ENCODE measurements at regions of chr9 and their contacts with region 1.

Region 1: DNA sequence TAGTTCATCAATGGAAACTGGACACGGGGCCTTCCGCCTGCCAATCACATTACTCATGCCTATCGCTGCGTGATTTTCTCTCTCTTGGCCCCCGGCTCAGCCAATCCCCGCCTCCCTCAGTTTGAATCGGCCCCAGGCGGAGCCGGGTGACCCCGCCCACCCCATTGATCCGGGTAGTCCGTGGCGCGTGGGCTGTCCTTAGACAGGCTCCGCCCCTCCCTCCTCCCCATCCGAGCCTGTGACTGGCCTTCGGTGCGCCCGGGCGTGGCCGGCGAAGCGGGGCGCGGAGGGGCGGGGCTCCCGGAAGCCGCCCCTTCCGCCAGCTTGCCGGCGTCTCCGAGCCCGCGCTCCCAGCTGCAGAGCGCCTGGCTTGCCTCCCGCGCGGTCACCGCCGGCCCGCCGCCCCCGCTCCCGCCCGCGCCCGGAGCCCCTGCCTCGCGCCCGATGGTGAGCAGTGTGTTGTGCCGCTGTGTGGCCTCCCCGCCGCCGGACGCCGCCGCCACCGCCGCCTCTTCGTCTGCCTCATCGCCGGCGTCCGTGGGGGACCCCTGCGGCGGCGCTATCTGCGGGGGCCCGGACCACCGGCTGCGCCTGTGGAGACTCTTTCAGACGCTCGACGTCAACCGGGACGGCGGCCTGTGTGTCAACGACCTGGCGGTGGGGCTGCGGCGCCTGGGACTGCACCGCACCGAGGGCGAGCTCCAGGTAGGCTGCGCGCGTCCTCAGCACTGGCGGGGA is at the start of gene SLC25A25:
- DNase-seq: peak; percentile 100
- H3K4me3 Mint-ChIP-seq: peak within 1 kb of the TSS; percentile 97
- H3K27ac Mint-ChIP-seq: peak within 1 kb of the TSS; percentile 86
- H3K4me1 Mint-ChIP-seq: peaks cover 55% of the 10 kb centered on the region
- H3K27me3 Mint-ChIP-seq: no peaks in the 10 kb centered on the region
- total RNA-seq, gene SLC25A25: 21.3 to 22.2 TPM

Region 2: GRCh38 chr9:127943731-127944144 is 124.3 kb before region 1 on chr9:
- CTCF ChIA-PET with region 1: interaction called, 28 read pairs
- POLR2A ChIA-PET with region 1: interaction called, 9 read pairs
- DNase-seq: peak; percentile 80
- H3K4me3 Mint-ChIP-seq: no peak overlapping the region
- H3K27ac Mint-ChIP-seq: peak overlapping the region; percentile 59
- H3K4me1 Mint-ChIP-seq: peaks cover 19% of the 10 kb centered on the region
- H3K27me3 Mint-ChIP-seq: no peaks in the 10 kb centered on the region

Region 3: GRCh38 chr9:127955294-127956035 is 112.6 kb before region 1 on chr9:
- CTCF ChIA-PET with region 1: interaction called, 3 read pairs
- POLR2A ChIA-PET with region 1: interaction called, 12 read pairs
- DNase-seq: peak; percentile 81
- H3K4me3 Mint-ChIP-seq: peak overlapping the region; percentile 31
- H3K27ac Mint-ChIP-seq: peak overlapping the region; percentile 66
- H3K4me1 Mint-ChIP-seq: peaks cover 72% of the 10 kb centered on the region
- H3K27me3 Mint-ChIP-seq: no peaks in the 10 kb centered on the region

Region 4: DNA sequence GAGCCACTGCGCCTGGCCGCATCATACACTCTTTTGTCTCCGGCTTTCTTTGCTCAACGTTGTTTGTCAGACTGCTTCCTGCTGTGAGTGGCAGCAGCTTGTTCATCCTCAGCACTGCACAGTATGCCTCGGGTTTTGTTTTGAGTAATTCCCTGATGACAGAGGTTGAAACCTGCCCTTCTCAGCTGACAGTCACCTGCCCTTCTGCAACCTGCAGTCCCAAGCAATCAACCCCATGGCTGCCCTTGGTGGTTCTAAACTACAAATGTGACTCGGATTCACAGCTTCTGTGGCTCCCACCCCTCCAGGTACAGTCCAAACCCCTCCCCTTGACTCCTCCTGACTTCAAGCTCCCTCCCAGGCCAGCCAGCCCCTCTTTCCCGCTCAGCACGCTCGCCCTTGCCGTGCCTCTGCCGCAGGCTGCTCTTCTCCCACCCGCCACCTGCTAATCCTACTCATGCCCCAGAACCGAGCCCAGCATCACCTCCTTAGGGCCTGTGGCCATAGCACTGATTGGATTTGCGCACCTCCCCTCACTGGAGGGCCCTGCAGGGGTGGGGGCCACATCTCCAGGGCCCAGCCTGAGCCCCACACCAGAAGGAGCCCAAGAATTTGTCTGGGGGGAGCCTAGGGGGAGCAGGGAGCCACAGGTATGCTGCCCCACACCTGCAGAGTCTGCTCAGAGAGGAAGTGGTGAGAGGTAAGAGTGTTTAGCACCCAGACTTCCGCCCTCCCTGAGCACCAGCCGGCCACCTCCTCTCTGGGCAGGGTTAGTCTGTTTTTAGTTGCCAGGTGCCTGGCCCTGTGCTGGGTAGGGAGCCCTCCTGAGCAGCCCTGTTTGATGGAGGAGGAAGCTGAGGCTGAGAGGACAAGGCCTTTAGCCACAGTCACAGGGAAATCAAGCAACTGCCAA is 97.4 kb before region 1 on chr9:
- CTCF ChIA-PET with region 1: interaction called, 4 read pairs
- POLR2A ChIA-PET with region 1: interaction called, 11 read pairs
- DNase-seq: peak; percentile 81
- H3K4me3 Mint-ChIP-seq: peak overlapping the region; percentile 74
- H3K27ac Mint-ChIP-seq: peak overlapping the region; percentile 93
- H3K4me1 Mint-ChIP-seq: peaks cover 95% of the 10 kb centered on the region
- H3K27me3 Mint-ChIP-seq: no peaks in the 10 kb centered on the region

Region 5: DNA sequence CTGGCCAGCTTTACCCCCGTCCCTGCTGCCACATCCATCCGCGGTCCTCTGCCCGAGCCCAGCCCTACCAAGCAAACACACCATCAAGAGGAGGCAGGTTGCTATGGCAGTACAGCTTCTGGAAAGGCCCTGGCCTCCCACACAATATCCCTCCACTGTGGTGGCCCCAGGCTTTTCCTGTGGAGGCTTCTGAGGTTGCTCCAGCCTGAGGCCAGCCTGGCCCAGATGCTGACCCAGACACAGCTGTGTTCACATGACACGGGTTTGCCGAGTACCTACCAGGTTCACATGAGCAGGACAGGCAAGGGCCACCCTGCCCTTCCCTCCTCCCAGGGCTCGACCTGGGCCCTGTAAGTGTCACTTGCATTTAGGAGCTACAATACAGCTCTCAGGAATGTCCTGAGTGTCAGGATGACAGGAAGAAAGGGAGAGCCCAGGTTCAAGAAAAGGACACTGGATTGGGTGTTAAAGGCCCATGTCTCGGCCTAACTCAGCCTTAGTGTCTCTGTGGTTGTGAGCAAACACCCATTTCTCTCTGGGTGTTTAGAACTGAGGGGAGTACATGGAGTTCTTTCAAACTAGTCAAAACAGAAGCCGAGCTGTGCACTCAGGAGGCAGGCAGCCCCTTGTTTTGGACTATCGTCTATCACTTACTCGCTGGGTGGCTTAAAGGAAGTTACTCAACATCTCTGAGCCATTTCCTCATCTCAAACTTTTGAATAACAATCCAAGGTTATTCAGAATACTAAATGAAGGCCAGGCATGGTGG is 41.1 kb before region 1 on chr9:
- CTCF ChIA-PET with region 1: no interaction called
- POLR2A ChIA-PET with region 1: interaction called, 31 read pairs
- DNase-seq: peak; percentile 55
- H3K4me3 Mint-ChIP-seq: peak overlapping the region; percentile 73
- H3K27ac Mint-ChIP-seq: peak overlapping the region; percentile 99
- H3K4me1 Mint-ChIP-seq: peaks cover 93% of the 10 kb centered on the region
- H3K27me3 Mint-ChIP-seq: no peaks in the 10 kb centered on the region

Region 6: GRCh38 chr9:128078504-128079434 is 10.7 kb after region 1 on chr9:
- CTCF ChIA-PET with region 1: interaction called, 27 read pairs
- POLR2A ChIA-PET with region 1: interaction called, 22 read pairs
- DNase-seq: no peak
- H3K4me3 Mint-ChIP-seq: peak overlapping the region; percentile 16
- H3K27ac Mint-ChIP-seq: peak overlapping the region; percentile 74
- H3K4me1 Mint-ChIP-seq: peaks cover 51% of the 10 kb centered on the region
- H3K27me3 Mint-ChIP-seq: no peaks in the 10 kb centered on the region

Region 7: GRCh38 chr9:128094166-128094967 is 26.3 kb after region 1 on chr9:
- CTCF ChIA-PET with region 1: interaction called, 8 read pairs
- POLR2A ChIA-PET with region 1: interaction called, 11 read pairs
- DNase-seq: peak; percentile 82
- H3K4me3 Mint-ChIP-seq: peak overlapping the region; percentile 33
- H3K27ac Mint-ChIP-seq: peak overlapping the region; percentile 83
- H3K4me1 Mint-ChIP-seq: peaks cover 73% of the 10 kb centered on the region
- H3K27me3 Mint-ChIP-seq: no peaks in the 10 kb centered on the region

Region 8: GRCh38 chr9:128361986-128362646 is 294.1 kb after region 1 on chr9:
- CTCF ChIA-PET with region 1: no interaction called
- POLR2A ChIA-PET with region 1: no interaction called
- DNase-seq: peak; percentile 75
- H3K4me3 Mint-ChIP-seq: peak overlapping the region; percentile 74
- H3K27ac Mint-ChIP-seq: no peak overlapping the region
- H3K4me1 Mint-ChIP-seq: peaks cover 11% of the 10 kb centered on the region
- H3K27me3 Mint-ChIP-seq: no peaks in the 10 kb centered on the region

Region 9: GRCh38 chr9:128455849-128456612 is 388.0 kb after region 1 on chr9 and contains the start of gene ODF2:
- CTCF ChIA-PET with region 1: no interaction called
- POLR2A ChIA-PET with region 1: no interaction called
- DNase-seq: peak; percentile 99
- H3K4me3 Mint-ChIP-seq: peak within 1 kb of the TSS; percentile 92
- H3K27ac Mint-ChIP-seq: peak within 1 kb of the TSS; percentile 92
- H3K4me1 Mint-ChIP-seq: peaks cover 26% of the 10 kb centered on the region
- H3K27me3 Mint-ChIP-seq: peaks cover 7% of the 10 kb centered on the region
- total RNA-seq, gene ODF2: 54.5 to 58.5 TPM

Measured in activated CD4-positive, alpha-beta memory T cell treated with anti-CD3 and anti-CD28 coated beads, Interleukin-2, amount 10 ng/mL, durations not matched to agents 7 days and 5 days (primary cell).